Panc1 (cell line): ENCODE measurements at regions of chr12 and their contacts with region 1.

Region 1: DNA sequence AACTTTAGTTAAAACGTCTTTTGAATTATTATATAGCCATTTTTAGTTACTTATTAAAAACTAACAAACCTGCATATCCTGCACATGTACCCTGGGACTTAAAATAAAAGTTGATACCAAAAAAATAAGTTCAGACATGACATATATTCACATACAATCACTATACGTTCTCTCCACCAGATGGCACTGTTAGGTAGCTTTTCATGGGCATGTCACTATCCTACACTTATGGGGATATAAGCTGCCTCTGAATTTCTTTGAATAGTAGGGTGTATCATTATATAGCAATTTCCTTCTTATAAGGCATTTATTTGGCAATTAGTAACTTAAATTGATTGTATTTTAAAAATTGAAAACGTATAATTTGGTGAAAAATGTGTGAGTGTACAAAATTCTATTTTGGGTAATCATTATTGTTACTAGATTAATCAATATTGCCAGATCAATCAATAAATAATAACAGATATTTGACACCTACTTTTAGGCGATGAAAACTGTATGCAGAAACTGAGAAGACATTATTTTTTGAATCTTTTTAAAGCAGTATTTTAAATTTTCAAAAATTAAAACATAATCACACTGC is 31.8 kb upstream of the OR10A7 start:
- DNase-seq: peak; percentile 81
- ATAC-seq: peak; percentile 97
- H3K4me3 ChIP-seq: no peak overlapping the region
- H3K27ac ChIP-seq: no peak overlapping the region
- H3K4me1 ChIP-seq: no peaks in the 10 kb centered on the region
- H3K27me3 ChIP-seq: no peaks in the 10 kb centered on the region
- CTCF ChIP-seq: peak; percentile 67; the same call in 1 of the 2 replicates

Region 2: DNA sequence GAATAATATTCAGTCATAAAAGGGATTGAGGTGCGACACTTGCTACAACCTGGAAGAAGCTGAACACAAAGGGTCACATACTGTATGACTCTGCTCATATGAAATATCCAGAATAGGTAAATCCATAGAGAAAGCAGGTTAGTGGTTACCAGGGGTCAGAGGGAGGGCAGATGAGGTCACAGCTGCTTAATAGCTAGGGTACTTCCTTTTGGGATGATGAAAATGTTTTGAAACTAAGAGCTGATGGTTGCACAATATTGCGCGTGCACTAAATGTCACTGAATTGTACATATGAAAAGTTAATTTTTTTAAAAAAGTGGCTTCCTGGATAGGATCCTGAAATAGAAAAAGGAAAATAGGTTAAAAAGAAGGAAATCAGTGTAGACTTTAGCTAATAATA is 145.5 kb before region 1 on chr12:
- CTCF ChIA-PET with region 1: no interaction called
- POLR2A ChIA-PET with region 1: no interaction called
- in situ Hi-C with region 1: no loop called
- intact Hi-C with region 1: no loop called
- DNase-seq: no peak
- ATAC-seq: no peak
- H3K4me3 ChIP-seq: no peak overlapping the region
- H3K27ac ChIP-seq: no peak overlapping the region
- H3K4me1 ChIP-seq: no peaks in the 10 kb centered on the region
- H3K27me3 ChIP-seq: peaks cover 25% of the 10 kb centered on the region
- CTCF ChIP-seq: no peak

Region 3: GRCh38 chr12:55073043-55074022 is 115.7 kb before region 1 on chr12:
- CTCF ChIA-PET with region 1: no interaction called
- POLR2A ChIA-PET with region 1: no interaction called
- in situ Hi-C with region 1: no loop called
- intact Hi-C with region 1: no loop called
- DNase-seq: peak; percentile 39
- ATAC-seq: peak; percentile 79; the same call in 1 of the 2 replicates
- H3K4me3 ChIP-seq: no peak overlapping the region
- H3K27ac ChIP-seq: no peak overlapping the region
- H3K4me1 ChIP-seq: no peaks in the 10 kb centered on the region
- H3K27me3 ChIP-seq: peaks cover 3% of the 10 kb centered on the region; the same call in 1 of the 2 replicates
- CTCF ChIP-seq: peak; percentile 79

Region 4: DNA sequence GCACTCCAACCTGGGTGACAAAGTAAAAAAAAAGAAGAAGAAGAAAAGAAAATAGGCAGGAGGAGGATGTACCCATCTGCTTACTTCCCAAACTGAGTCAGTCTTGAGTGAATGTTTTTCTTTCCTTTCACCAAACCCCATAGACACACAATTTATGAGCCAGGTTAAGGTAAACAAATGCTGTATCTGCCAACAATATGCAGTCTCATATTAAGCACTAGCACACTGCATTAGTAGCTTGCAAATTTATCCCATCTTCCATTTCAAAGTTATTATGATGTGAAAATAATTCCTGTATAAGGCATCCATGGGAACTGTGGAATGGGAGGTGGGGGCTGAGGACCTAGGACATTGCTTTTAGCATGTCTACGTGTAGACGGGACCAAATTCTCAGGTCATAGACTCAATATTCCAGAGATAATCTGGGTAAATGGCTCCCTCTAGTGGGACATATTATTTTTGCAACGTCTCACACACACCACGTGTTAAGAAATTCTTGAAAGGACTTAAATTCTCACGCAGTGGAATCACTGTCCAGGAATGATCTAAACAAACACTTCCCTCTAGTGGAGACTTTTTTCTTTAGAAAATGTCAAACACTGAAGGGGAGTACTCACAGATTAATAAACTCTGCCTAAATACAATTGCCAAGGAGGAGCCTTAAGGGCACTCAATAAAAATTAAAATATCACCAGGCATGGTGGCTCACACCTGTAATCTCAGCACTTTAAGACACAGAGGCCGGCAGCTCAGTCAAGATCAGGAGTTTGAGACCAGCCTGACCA is 430.5 kb after region 1 on chr12:
- CTCF ChIA-PET with region 1: interaction called, 8 read pairs
- POLR2A ChIA-PET with region 1: no interaction called
- in situ Hi-C with region 1: no loop called
- intact Hi-C with region 1: loop called (anchors 1 kb)
- DNase-seq: peak; percentile 94
- ATAC-seq: peak; percentile 99
- H3K4me3 ChIP-seq: no peak overlapping the region
- H3K27ac ChIP-seq: no peak overlapping the region
- H3K4me1 ChIP-seq: 0 out of 2 replicates have a peak, but pooled peaks cover 4% of the 10 kb centered on the region
- H3K27me3 ChIP-seq: peaks cover 8% of the 10 kb centered on the region; the same call in 1 of the 2 replicates
- CTCF ChIP-seq: peak; percentile 83